Activated CD4-positive, alpha-beta T cell treated with anti-CD3 and anti-CD28 coated beads for 36 hours (primary cell): ENCODE measurements at regions of chr3 and their contacts with region 1.

Region 1: GRCh38 chr3:183122257-183122932 is 23.1 kb upstream of the MCCC1 start:
- DNase-seq: no peak
- ATAC-seq: peak; percentile 74
- H3K4me3 Mint-ChIP-seq: no peak overlapping the region
- H3K27ac Mint-ChIP-seq: no peak overlapping the region
- H3K4me1 Mint-ChIP-seq: peaks cover 10% of the 10 kb centered on the region
- H3K27me3 Mint-ChIP-seq: peaks cover 4% of the 10 kb centered on the region

Region 2: GRCh38 chr3:182713743-182714517 is 408.5 kb before region 1 on chr3:
- CTCF ChIA-PET with region 1: no interaction called
- POLR2A ChIA-PET with region 1: no interaction called
- intact Hi-C with region 1: loop called in 1 of 2 experiments (anchors 5 kb)
- DNase-seq: no peak
- ATAC-seq: peak; percentile 66
- H3K4me3 Mint-ChIP-seq: no peak overlapping the region
- H3K27ac Mint-ChIP-seq: no peak overlapping the region
- H3K4me1 Mint-ChIP-seq: peaks cover 8% of the 10 kb centered on the region
- H3K27me3 Mint-ChIP-seq: peaks cover 3% of the 10 kb centered on the region

Region 3: DNA sequence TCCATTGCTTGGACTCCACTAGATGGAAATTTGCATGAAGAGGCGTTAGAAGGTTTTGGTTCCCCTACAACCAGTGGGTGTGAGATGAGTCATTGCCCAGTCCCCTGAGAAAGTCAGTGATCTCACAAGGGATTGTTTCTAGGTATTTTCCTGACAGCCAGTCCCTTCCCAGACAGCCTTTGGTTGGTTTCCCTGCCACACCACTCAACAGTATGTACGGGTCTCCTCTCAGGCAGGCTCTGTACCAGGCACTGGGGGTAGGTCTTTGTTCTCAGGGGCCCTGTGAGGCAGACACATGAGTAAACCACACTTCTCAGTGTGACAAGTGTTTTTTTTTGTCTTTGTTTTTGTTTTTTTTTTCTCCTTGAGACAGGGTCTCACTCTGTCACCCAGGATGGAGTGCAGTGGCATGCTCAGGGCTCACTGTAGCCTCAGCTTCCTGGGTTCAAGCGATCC is 36.2 kb after region 1 on chr3:
- CTCF ChIA-PET with region 1: interaction called, 12 read pairs
- POLR2A ChIA-PET with region 1: no interaction called
- intact Hi-C with region 1: loop called in 1 of 2 experiments (anchors 5 kb)
- DNase-seq: peak; percentile 68
- ATAC-seq: peak; percentile 64
- H3K4me3 Mint-ChIP-seq: no peak overlapping the region
- H3K27ac Mint-ChIP-seq: peak overlapping the region; percentile 62
- H3K4me1 Mint-ChIP-seq: peaks cover 34% of the 10 kb centered on the region
- H3K27me3 Mint-ChIP-seq: no peaks in the 10 kb centered on the region

Region 4: DNA sequence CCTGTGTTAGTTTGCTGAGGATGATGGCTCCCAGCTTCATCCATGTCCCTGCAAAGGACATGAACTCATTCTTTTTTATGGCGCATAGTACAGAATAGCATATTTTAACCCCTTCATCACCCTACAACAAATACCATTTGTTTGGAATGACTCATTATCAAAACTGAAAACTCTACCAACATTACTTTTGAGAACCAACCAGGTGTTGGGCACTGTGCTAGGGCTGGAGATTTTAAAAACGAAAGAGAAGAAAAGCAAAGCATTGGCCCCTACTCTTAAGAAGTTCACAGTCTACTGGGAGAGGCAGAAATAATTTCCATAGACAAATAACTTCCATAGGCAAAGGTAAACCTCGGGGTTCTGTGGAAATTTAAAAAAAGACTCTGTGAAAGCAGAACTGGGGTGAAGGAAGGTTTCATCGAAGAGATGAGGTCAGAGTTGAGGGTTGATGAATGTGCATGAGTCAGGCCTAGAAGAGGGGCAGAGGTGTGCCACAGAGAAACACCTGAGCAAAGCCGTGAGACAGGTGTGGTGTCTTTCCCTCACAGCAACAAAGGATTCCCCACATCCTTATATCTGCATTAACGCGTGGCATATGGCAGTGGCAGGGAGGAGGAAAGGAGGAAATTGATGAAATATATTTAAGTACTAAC is 255.0 kb after region 1 on chr3:
- CTCF ChIA-PET with region 1: interaction called, 141 read pairs
- POLR2A ChIA-PET with region 1: no interaction called
- intact Hi-C with region 1: loop called (anchors 1 kb)
- DNase-seq: peak; percentile 24
- ATAC-seq: peak; percentile 77
- H3K4me3 Mint-ChIP-seq: no peak overlapping the region
- H3K27ac Mint-ChIP-seq: peak overlapping the region; percentile 58
- H3K4me1 Mint-ChIP-seq: peaks cover 43% of the 10 kb centered on the region
- H3K27me3 Mint-ChIP-seq: no peaks in the 10 kb centered on the region

Region 5: GRCh38 chr3:183392186-183393034 is 270.0 kb after region 1 on chr3:
- CTCF ChIA-PET with region 1: interaction called, 24 read pairs
- POLR2A ChIA-PET with region 1: no interaction called
- intact Hi-C with region 1: no loop called
- DNase-seq: no peak
- ATAC-seq: no peak
- H3K4me3 Mint-ChIP-seq: no peak overlapping the region
- H3K27ac Mint-ChIP-seq: no peak overlapping the region
- H3K4me1 Mint-ChIP-seq: peaks cover 2% of the 10 kb centered on the region
- H3K27me3 Mint-ChIP-seq: no peaks in the 10 kb centered on the region